Ovary (tissue), 10 donors: ENCODE measurements at regions of chr10 and their contacts with region 1.

Region 1: DNA sequence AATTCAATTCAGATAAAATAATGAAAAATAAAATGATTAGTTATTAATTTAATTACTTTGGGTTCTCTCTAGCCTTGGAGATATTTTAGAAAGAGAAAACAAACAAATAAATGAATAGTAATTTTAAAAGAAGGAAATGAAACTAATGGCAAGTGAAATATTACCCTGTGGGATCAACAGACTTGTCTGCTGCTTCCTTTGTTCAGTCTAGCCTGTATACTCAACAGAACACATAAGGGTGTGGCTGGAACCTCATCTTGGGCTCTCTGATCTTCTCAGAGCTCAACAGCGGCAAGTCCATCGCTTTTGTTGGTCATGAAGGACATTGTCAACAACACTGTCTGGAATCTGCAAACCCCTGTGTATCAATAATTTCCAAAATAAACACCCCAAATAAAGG is 904.9 kb downstream of the IPMK start:
- DNase-seq: no peak
- H3K4me3 ChIP-seq: no peak overlapping the region
- H3K27ac ChIP-seq: no peak overlapping the region
- H3K4me1 ChIP-seq: no peaks in the 10 kb centered on the region
- H3K27me3 ChIP-seq: no peaks in the 10 kb centered on the region
- CTCF ChIP-seq: no peak
- EP300 ChIP-seq: no peak
- POLR2A ChIP-seq: no peak

Region 2: DNA sequence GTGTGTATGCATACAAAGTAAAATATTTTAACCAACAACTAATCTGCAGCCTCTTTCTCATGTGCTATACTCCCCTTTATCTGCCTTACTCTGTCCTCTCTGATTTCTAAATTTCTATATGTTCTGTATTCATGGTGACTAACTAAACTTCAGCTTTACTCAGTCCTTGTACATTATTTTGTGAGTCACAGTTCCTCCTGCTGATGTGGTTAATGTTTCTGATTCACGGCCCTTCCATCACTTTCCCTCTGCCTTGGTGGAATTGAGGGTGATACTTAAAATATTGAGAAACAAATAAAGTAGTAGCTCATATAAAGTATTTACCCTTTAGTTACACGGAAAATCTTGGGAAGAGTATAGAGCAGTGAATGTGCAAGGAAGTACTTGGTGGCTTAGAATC is 102.6 kb before region 1 on chr10:
- intact Hi-C with region 1: loop called in 1 of 4 experiments (anchors 1 kb)
- DNase-seq: no peak
- H3K4me3 ChIP-seq: no peak overlapping the region
- H3K27ac ChIP-seq: no peak overlapping the region
- H3K4me1 ChIP-seq: no peaks in the 10 kb centered on the region
- H3K27me3 ChIP-seq: no peaks in the 10 kb centered on the region
- CTCF ChIP-seq: no peak
- EP300 ChIP-seq: no peak
- POLR2A ChIP-seq: no peak